ENCODE measurements at regions of chr16 and their contacts with region 1.

Region 1: DNA sequence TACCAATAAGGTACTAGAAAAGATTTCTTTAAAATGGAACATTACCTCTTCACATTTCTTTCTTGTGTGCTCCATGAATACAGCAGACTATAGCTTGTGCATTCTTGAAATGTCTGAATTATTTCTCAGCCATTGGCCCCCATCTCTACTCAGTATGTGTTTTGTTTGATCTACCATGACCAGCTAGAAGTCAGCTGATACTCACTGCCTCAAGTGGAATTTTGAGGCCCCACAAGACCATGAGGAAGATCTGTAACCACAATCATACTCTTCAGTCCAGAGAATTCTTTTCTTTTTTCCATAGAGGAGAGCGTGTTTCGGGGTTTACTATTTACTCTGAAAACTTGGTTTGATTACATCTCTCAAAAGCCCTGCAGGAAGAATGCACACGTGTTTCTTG is 319.1 kb downstream of the TOX3 start:
- DNase-seq: no peak
- H3K4me3 ChIP-seq: no peak overlapping the region
- H3K27ac ChIP-seq: no peak overlapping the region
- H3K4me1 ChIP-seq: no peaks in the 10 kb centered on the region
- H3K27me3 ChIP-seq: no peaks in the 10 kb centered on the region
- CTCF ChIP-seq: no peak
- POLR2A ChIP-seq: no peak

Region 2: GRCh38 chr16:52149003-52149402 is 78.8 kb before region 1 on chr16:
- intact Hi-C with region 1: no loop called
- DNase-seq: no peak
- H3K4me3 ChIP-seq: no peak overlapping the region
- H3K27ac ChIP-seq: no peak overlapping the region
- H3K4me1 ChIP-seq: no peaks in the 10 kb centered on the region
- H3K27me3 ChIP-seq: no peaks in the 10 kb centered on the region
- CTCF ChIP-seq: no peak
- POLR2A ChIP-seq: no peak

Region 3: GRCh38 chr16:52757746-52758472 is 530.1 kb after region 1 on chr16:
- intact Hi-C with region 1: loop called (anchors 5 kb)
- DNase-seq: no peak
- H3K4me3 ChIP-seq: no peak overlapping the region
- H3K27ac ChIP-seq: no peak overlapping the region
- H3K4me1 ChIP-seq: no peaks in the 10 kb centered on the region
- H3K27me3 ChIP-seq: no peaks in the 10 kb centered on the region
- CTCF ChIP-seq: no peak
- POLR2A ChIP-seq: no peak

Region 4: GRCh38 chr16:53291757-53292392 is 1064.0 kb after region 1 on chr16:
- intact Hi-C with region 1: no loop called
- DNase-seq: no peak
- H3K4me3 ChIP-seq: no peak overlapping the region
- H3K27ac ChIP-seq: no peak overlapping the region
- H3K4me1 ChIP-seq: no peaks in the 10 kb centered on the region
- H3K27me3 ChIP-seq: no peaks in the 10 kb centered on the region
- CTCF ChIP-seq: no peak
- POLR2A ChIP-seq: no peak

Measured in breast epithelium (tissue), 4 donors.